ENCODE measurements at regions of chr6 and their contacts with region 1.

Region 1: DNA sequence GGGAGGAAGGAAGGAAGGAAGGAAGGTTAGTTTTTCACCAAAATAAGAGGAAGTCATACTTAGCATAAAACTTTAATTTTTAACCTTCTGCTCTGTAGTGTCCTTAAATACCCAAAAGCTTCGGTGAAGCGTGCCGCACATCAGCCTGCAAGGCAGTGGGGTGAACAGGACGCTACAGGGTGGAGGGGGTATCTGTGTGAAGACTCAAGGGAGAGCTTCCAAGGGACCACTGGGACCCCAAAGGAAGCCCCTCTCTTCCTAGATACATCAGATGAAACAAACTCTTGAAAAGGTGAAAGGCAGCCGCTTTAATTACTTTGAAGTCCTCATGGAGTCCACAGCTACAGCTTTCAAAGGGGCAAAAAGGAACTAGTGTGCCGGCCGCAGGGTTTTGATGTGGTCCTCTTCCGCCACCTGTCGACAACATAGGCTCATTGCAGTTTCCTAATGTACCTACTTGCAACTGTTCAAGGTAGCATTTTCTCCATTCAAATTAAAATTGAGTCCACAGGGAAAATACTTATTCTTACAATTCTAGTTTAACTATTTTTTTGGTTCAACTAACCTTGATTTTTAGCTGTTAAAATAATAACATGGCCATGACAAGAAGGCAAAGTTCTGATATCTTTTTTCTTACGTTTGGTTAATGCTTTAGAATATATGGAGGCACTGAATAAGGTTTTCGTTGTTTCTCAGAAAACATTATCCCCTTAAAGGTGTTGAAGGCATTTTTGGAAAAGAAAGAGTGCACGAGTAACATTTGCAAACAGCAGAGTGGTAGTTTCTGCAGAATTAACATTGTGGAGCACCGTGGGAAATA is 135.0 kb upstream of the RIPOR2 start:
- DNase-seq: peak; percentile 65
- ATAC-seq: peak; percentile 96
- H3K4me3 ChIP-seq: peak overlapping the region; percentile 70
- H3K27ac ChIP-seq: no peak overlapping the region
- H3K4me1 ChIP-seq: no peaks in the 10 kb centered on the region
- H3K27me3 ChIP-seq: no peaks in the 10 kb centered on the region
- CTCF ChIP-seq: peak; percentile 85 to 90 (median 88)
- EP300 ChIP-seq: no peak
- POLR2A ChIP-seq: no peak
- RAD21 ChIP-seq: peak; percentile 97

Region 2: GRCh38 chr6:24720604-24721460 is 349.9 kb before region 1 on chr6:
- CTCF ChIA-PET with region 1: interaction called, 3 read pairs
- POLR2A ChIA-PET with region 1: no interaction called
- RAD21 ChIA-PET with region 1: interaction called, 3 read pairs
- SMC1A ChIA-PET with region 1: no interaction called
- in situ Hi-C with region 1: no loop called
- intact Hi-C with region 1: loop called (anchors 2 kb)
- DNase-seq: peak; percentile 98
- ATAC-seq: peak; percentile 89
- H3K4me3 ChIP-seq: peak overlapping the region; percentile 86
- H3K27ac ChIP-seq: peak overlapping the region; percentile 95
- H3K4me1 ChIP-seq: no peaks in the 10 kb centered on the region; the same call in 1 of the 2 replicates
- H3K27me3 ChIP-seq: no peaks in the 10 kb centered on the region
- CTCF ChIP-seq: no peak
- EP300 ChIP-seq: no peak
- POLR2A ChIP-seq: peak; percentile 73
- RAD21 ChIP-seq: no peak

Region 3: GRCh38 chr6:24855395-24856245 is 215.1 kb before region 1 on chr6:
- CTCF ChIA-PET with region 1: interaction called, 29 read pairs
- POLR2A ChIA-PET with region 1: no interaction called
- RAD21 ChIA-PET with region 1: interaction called, 50 read pairs
- SMC1A ChIA-PET with region 1: interaction called, 52 read pairs
- in situ Hi-C with region 1: loop called (anchors 5 kb)
- intact Hi-C with region 1: loop called (anchors 1 kb)
- DNase-seq: peak; percentile 58
- ATAC-seq: peak; percentile 85
- H3K4me3 ChIP-seq: no peak overlapping the region
- H3K27ac ChIP-seq: no peak overlapping the region
- H3K4me1 ChIP-seq: peaks cover 32% of the 10 kb centered on the region
- H3K27me3 ChIP-seq: no peaks in the 10 kb centered on the region
- CTCF ChIP-seq: peak; percentile 78 to 90 (median 87)
- EP300 ChIP-seq: no peak
- POLR2A ChIP-seq: no peak
- RAD21 ChIP-seq: peak; percentile 98

Region 4: DNA sequence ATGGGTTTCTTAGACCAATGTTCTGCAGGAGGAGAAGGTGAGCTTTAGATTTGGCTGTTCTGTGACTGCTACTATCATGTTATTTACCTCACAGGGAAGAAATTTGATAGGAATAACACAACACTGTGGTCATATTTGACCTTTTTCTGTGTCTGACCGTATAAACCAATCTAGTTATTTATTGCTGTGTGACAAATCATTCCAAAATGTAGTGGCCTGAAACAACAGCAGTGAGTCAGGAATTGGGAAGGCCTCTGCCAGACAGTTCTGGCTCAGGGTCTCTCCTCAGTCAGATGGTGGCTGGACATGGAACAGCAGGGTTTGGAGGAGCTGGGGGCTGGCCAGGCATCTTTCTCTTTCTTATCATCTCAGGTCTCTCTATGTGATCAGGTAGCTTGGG is 168.0 kb before region 1 on chr6:
- CTCF ChIA-PET with region 1: no interaction called
- POLR2A ChIA-PET with region 1: no interaction called
- RAD21 ChIA-PET with region 1: no interaction called
- SMC1A ChIA-PET with region 1: no interaction called
- in situ Hi-C with region 1: no loop called
- intact Hi-C with region 1: no loop called
- DNase-seq: no peak
- ATAC-seq: no peak
- H3K4me3 ChIP-seq: no peak overlapping the region
- H3K27ac ChIP-seq: no peak overlapping the region
- H3K4me1 ChIP-seq: no peaks in the 10 kb centered on the region
- H3K27me3 ChIP-seq: no peaks in the 10 kb centered on the region
- CTCF ChIP-seq: no peak
- EP300 ChIP-seq: no peak
- POLR2A ChIP-seq: no peak
- RAD21 ChIP-seq: no peak

Region 5: DNA sequence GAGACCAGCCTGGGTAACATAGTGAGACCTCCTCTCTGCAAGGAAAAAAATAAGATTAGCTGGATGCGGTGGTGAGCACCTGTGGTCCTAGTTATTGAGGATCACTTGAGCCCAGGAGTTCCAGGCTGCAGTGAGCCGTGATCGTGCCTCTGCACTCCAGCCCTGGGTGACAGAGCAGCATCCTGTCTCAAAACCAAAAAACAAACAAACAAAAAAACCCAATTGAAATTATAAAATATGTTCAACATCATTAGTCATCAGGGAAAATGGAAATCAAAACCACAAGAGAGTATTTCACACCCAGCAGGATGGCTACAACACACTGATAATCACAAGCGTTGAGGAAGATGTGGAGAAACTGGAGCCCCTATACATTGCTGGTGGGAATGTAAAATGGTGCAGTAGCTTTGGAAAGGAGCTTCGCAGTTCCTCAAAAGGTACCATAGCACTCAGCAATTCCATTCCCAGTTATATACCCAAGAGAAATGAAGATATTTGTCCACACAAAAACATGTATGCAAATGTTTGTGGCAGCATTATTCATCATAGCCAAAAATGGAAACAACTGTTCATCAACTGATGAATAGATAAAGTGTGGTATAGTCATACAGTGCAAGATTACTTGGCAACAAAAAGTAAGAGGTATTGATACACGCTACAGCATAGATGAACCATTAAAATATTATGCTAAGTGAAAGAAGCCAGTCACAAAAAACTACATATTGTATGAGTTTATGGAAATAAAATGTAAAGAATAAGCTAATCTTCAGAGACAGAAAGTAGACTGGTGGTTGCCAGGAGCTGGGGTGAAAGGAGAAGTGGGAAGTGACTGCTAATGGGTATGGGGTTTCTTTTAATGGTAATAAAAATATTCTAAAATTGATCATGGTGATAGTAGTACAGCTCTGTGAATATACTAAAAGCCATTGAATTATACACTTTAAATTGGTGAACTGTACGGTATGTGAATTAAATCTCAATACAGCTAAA is 96.3 kb before region 1 on chr6:
- CTCF ChIA-PET with region 1: interaction called, 12 read pairs
- POLR2A ChIA-PET with region 1: no interaction called
- RAD21 ChIA-PET with region 1: interaction called, 3 read pairs
- SMC1A ChIA-PET with region 1: no interaction called
- in situ Hi-C with region 1: no loop called
- intact Hi-C with region 1: no loop called
- DNase-seq: no peak
- ATAC-seq: peak; percentile 95
- H3K4me3 ChIP-seq: no peak overlapping the region
- H3K27ac ChIP-seq: no peak overlapping the region
- H3K4me1 ChIP-seq: peaks cover 10% of the 10 kb centered on the region
- H3K27me3 ChIP-seq: no peaks in the 10 kb centered on the region
- CTCF ChIP-seq: no peak
- EP300 ChIP-seq: no peak; a peak in 1 of 4 replicates
- POLR2A ChIP-seq: no peak
- RAD21 ChIP-seq: no peak

Region 6: DNA sequence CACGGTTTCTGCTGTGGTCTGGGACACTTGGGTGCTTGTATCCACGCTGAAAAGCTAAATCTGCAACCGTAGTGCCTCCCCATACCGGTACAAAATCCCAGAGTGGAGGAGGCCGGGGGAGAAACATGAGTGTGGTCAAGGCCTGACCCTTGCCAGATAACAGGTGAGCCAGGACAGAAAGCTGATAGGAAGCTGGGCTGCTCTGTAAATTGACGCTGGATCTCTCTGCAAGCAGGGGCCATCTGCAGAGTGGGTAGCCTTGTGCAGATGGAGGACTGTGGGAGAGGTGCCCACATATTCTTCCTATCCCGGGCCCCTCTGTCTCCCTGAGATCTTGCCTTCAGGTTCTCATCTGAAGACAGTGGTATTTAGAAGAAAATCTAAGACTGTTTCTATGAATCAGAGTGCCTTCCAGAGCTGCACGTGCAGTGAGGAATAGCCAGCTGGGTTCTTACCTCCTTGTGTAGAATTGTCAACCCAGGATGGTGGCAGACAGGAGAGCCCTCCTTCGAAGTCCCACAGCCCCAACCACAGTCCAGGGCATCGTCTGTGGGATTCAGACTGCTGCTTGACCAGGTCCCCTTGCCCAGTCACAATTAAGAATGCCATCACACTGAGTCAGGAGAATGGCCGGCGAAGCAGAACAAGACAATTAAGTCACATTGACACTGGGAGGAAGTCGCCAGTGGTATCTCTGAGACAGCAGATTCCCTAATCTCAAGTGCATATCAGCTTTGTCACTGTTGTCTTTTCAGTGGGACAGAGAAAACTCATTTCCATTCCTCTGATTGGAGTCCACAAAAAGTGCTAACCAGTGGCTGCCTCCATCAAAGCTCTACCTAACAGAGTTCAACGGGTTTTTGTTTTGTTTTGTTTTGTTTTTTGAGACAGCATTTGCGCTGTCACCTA is 35.0 kb before region 1 on chr6:
- CTCF ChIA-PET with region 1: interaction called, 204 read pairs
- POLR2A ChIA-PET with region 1: interaction called, 4 read pairs
- RAD21 ChIA-PET with region 1: interaction called, 52 read pairs
- SMC1A ChIA-PET with region 1: interaction called, 26 read pairs
- in situ Hi-C with region 1: no loop called
- intact Hi-C with region 1: no loop called
- DNase-seq: no peak
- ATAC-seq: peak; percentile 71
- H3K4me3 ChIP-seq: peak overlapping the region; percentile 52; the same call in 1 of the 2 replicates
- H3K27ac ChIP-seq: peak overlapping the region; percentile 80
- H3K4me1 ChIP-seq: peaks cover 19% of the 10 kb centered on the region
- H3K27me3 ChIP-seq: no peaks in the 10 kb centered on the region
- CTCF ChIP-seq: no peak
- EP300 ChIP-seq: no peak
- POLR2A ChIP-seq: no peak
- RAD21 ChIP-seq: no peak

Region 7: DNA sequence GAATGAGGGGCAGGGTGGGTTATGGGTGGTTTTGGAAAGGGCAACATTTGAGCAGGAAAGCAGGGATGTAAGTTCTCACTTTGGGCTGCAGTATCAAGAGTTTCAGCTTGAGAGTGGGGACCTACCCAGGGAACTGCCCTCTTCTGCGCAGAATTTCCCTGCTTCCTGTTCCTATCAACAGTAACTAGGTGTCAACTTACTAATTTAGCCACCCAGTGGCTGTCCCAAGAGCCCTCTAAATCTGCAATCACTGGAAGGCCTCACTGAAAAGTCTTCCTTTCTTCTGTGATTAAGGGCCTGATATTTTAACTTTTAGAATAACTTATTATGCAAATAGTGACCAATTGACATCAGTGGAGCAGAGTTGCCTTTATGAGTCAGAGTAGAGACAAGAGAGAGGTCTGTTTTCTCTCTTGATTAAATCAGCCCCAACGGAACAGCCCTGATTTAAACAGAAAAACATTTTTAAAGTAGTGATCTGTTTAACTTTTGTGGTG is 16.8 kb before region 1 on chr6:
- CTCF ChIA-PET with region 1: interaction called, 16 read pairs
- POLR2A ChIA-PET with region 1: interaction called, 4 read pairs
- RAD21 ChIA-PET with region 1: interaction called, 19 read pairs
- SMC1A ChIA-PET with region 1: interaction called, 24 read pairs
- in situ Hi-C with region 1: no loop called
- intact Hi-C with region 1: no loop called
- DNase-seq: no peak
- ATAC-seq: peak; percentile 93
- H3K4me3 ChIP-seq: no peak overlapping the region
- H3K27ac ChIP-seq: peak overlapping the region; percentile 41
- H3K4me1 ChIP-seq: peaks cover 26% of the 10 kb centered on the region
- H3K27me3 ChIP-seq: no peaks in the 10 kb centered on the region
- CTCF ChIP-seq: peak in 2 of 3 experiments; percentile 16 to 20; a peak in 2 of 6 replicates
- EP300 ChIP-seq: peak in 1 of 2 experiments; percentile 29; a peak in 1 of 4 replicates
- POLR2A ChIP-seq: no peak
- RAD21 ChIP-seq: peak; percentile 21; the same call in 1 of the 2 replicates

Region 8: DNA sequence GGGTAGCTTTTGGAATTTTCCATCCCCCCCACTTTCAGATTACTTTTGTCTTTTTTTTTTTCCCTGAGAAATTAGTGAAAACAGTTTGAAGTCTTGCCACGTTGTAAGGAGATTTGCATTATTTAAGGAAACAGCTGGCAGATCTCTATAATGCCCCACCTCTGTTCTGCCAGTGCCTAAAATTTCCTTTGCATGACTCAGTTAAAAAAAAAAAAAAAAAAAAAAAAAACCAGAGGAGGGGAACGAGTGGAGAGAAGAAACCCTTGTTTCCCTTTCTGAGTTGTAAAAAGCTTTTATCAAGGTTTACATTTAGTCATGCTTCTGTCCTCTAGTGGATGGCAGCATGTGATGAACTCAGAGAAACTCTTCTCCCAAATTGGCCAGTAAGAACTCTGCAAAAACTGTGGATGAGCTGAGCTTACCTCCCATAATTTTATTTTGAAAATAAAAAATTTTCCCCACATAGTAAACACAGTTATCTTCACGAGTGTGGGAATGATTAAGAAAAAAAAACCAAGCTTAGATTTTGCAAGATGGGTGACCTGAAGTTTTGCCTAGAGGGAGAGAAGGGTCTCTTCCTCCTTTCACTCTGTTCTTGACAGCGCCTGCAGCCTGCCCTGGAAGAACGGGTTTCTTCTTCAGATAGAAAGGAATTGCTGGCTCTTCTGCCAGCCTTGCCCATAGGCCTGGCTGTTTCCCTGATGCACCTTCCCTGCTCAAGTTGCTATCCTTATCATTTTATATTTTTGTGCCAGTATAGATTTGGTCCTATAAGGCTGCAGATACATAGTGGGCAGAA is 242.1 kb after region 1 on chr6:
- CTCF ChIA-PET with region 1: no interaction called
- POLR2A ChIA-PET with region 1: no interaction called
- RAD21 ChIA-PET with region 1: no interaction called
- SMC1A ChIA-PET with region 1: no interaction called
- in situ Hi-C with region 1: no loop called
- intact Hi-C with region 1: no loop called
- DNase-seq: no peak
- ATAC-seq: peak; percentile 45; the same call in 2 of the 3 replicates
- H3K4me3 ChIP-seq: no peak overlapping the region
- H3K27ac ChIP-seq: no peak overlapping the region
- H3K4me1 ChIP-seq: no peaks in the 10 kb centered on the region
- H3K27me3 ChIP-seq: no peaks in the 10 kb centered on the region
- CTCF ChIP-seq: no peak
- EP300 ChIP-seq: no peak
- POLR2A ChIP-seq: no peak
- RAD21 ChIP-seq: no peak